Heart right ventricle (tissue), 16 donors: ENCODE measurements at regions of chr3 and their contacts with region 1.

Region 1: DNA sequence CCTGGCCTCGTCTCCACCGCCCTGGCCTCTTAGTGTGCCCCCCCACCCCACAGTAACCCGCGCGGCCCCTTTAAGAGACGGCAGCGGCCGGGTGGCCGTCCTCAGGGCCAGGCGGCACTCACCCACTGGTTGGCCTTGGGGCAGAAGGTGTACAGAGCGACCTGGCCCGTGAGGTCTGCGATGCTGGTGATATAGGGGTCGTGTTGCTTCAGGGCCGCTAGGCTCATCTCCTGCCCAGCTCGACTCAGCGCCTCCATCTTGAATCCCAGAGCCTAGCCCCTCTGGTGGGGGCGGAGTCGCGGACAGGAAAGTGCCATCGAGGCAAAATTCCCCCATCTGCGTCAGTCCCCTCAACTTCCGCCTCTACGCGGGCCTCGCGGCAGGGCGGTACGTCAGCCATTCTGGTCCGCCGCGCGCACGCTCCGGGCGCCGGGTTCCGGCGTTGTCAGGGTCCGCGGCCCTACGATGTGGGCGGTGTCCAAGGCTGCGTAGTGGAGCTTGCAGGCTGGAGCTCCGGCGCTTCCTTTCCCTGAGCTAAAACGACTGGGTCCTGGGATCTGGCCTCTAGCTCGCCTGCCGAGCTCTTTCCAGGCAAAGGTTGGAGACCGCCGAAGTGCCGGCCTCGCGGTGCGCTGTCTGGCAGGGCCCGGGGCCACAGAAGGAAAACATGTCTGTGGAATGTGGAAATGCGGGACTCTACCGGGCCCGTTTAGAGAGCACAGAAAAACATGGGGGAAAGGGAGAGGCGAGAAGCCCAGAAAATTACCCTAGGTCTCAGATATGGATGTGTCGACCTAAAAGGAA is at the start of gene DCP1A:
- DNase-seq: peak; percentile 93 to 96
- ATAC-seq: peak; percentile 99
- H3K4me3 ChIP-seq: peak within 1 kb of the TSS; percentile 77 to 92 (median 84)
- H3K27ac ChIP-seq: peak within 1 kb of the TSS; percentile 82 to 97 (median 95)
- H3K4me1 ChIP-seq: peaks cover 0 to 47% (median 35%) of the 10 kb centered on the region in 9 donors
- H3K27me3 ChIP-seq: no peaks in the 10 kb centered on the region
- CTCF ChIP-seq: no peak
- total RNA-seq, gene DCP1A: 16.0 to 24.1 (median 19.5) TPM

Region 2: GRCh38 chr3:53130179-53131061 is 217.0 kb before region 1 on chr3 and contains the start of gene RFT1:
- intact Hi-C with region 1: no loop called
- DNase-seq: peak; percentile 98 to 99
- ATAC-seq: peak; percentile 94 to 99 (median 98)
- H3K4me3 ChIP-seq: peak within 1 kb of the TSS; percentile 73 to 96 (median 89)
- H3K27ac ChIP-seq: peak within 1 kb of the TSS; percentile 84 to 98 (median 90)
- H3K4me1 ChIP-seq: peaks cover 6 to 42% (median 23%) of the 10 kb centered on the region in 9 donors
- H3K27me3 ChIP-seq: no peaks in the 10 kb centered on the region
- CTCF ChIP-seq: peak in 4 of 9 donors; percentile 10 to 43 (median 38)
- total RNA-seq, gene RFT1: 5.7 to 13.1 (median 9.5) TPM

Region 3: GRCh38 chr3:53255775-53256703 is 91.4 kb before region 1 on chr3 and contains the start of gene TKT:
- intact Hi-C with region 1: loop called in 2 of 10 experiments (anchors 5 to 10 kb)
- DNase-seq: peak; percentile 83 to 89
- ATAC-seq: peak; percentile 80 to 90 (median 86)
- H3K4me3 ChIP-seq: peak within 1 kb of the TSS; percentile 61 to 95 (median 77)
- H3K27ac ChIP-seq: peak within 1 kb of the TSS; percentile 23 to 95 (median 90)
- H3K4me1 ChIP-seq: peaks cover 14 to 54% (median 45%) of the 10 kb centered on the region in 9 donors
- H3K27me3 ChIP-seq: no peaks in the 10 kb centered on the region
- CTCF ChIP-seq: no peak
- total RNA-seq, gene TKT: 16.5 to 81.8 (median 25.1) TPM

Region 4: DNA sequence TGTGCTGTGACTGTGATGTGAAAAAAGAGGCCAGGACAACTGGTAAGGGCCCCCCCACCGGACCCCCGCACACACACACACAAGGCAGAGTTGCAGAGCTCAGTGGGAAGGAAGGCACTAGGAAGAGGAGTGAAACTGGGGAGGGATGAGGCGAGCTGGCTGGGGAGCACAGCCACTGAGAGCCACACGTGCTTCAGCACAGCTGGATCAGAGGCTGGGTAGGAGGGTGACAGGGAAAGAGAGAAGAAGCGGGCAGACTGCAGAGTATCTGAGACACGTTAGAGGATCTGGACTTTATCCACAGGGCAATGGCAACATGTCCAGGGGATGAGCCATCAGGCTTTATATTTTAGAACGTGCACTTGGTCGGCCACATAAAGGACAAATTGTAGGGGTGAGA is 53.6 kb before region 1 on chr3:
- intact Hi-C with region 1: loop called in 2 of 10 experiments (anchors 5 kb)
- DNase-seq: no peak
- ATAC-seq: peak in 7 of 8 donors; percentile 7 to 65 (median 50)
- H3K4me3 ChIP-seq: no peak overlapping the region
- H3K27ac ChIP-seq: no peak overlapping the region
- H3K4me1 ChIP-seq: peaks cover 0 to 27% (median 0%) of the 10 kb centered on the region in 9 donors
- H3K27me3 ChIP-seq: no peaks in the 10 kb centered on the region
- CTCF ChIP-seq: no peak

Region 5: GRCh38 chr3:53303957-53304356 is 43.5 kb before region 1 on chr3:
- intact Hi-C with region 1: loop called in 3 of 10 experiments (anchors 5 kb)
- DNase-seq: no peak
- ATAC-seq: peak in 6 of 8 donors; percentile 25 to 55 (median 37)
- H3K4me3 ChIP-seq: no peak overlapping the region
- H3K27ac ChIP-seq: peak overlapping the region in 8 of 10 donors; percentile 42 to 78 (median 58)
- H3K4me1 ChIP-seq: peaks cover 0 to 26% (median 7%) of the 10 kb centered on the region in 9 donors
- H3K27me3 ChIP-seq: no peaks in the 10 kb centered on the region
- CTCF ChIP-seq: no peak

Region 6: DNA sequence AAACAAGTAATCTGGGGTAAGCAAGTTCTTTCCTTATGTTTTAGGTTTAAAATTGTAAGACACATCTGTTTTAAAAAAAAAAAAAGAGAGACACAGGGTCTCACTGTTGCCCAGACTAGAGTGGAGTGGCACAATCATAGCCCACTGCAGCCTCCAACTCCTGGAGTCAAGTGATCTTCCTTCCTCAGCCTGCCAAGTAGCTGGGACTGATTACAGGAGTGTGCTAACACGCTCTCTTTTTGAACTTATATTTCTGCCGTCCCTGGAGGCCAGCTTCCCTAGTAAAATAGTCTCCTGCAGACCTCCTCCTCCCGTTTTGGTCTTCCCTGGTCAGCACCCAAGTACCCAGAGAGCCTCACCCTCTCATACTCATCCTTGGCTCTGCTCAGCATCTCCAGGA is 35.6 kb before region 1 on chr3:
- intact Hi-C with region 1: loop called in 1 of 10 experiments (anchors 5 kb)
- DNase-seq: no peak
- ATAC-seq: peak in 3 of 8 donors; percentile 42 to 58 (median 45)
- H3K4me3 ChIP-seq: no peak overlapping the region
- H3K27ac ChIP-seq: no peak overlapping the region
- H3K4me1 ChIP-seq: peaks cover 0 to 21% (median 0%) of the 10 kb centered on the region in 9 donors
- H3K27me3 ChIP-seq: no peaks in the 10 kb centered on the region
- CTCF ChIP-seq: no peak

Region 7: DNA sequence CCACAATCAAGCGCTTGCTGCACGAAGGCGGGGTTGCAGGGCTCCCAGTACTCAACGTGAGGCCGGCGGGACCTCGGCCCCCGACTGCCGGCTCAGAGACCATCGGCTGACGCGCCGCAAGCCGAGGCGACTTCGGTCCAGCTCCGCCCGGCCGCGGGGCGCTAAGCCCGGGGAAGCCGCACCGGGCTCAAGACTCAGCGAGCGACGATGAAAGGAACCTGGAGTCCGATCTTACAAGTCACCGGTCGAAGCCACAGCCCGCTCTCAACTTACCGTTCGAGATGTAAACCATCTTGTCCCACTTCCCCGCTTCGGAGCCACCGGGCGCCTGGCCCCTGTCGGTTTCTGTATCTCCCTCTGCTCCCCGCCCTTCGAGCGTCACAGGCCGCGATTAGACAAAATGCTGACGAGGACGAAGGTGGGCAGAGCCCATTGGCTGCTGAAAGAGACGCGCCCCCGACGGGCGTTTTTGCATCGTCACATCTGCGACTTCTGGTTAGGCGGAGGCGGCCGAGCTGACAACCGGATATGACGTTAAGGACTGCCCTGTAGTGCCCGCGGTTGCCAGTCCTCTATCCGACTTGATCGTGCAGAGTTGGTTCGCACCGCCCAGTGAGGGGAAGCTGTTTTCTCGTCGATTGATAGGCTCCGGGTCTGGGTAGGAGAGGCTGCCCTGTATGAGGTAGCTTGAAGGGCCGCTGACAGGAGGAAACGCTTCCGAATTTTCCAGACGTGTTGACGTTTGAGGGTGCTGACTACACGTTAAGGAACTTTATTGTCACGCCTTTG is 544.2 kb after region 1 on chr3 and contains the start of gene SELENOK:
- intact Hi-C with region 1: loop called in 1 of 10 experiments (anchors 5 kb)
- DNase-seq: peak; percentile 97 to 99
- ATAC-seq: peak; percentile 98 to 99 (median 99)
- H3K4me3 ChIP-seq: peak within 1 kb of the TSS; percentile 76 to 97 (median 82)
- H3K27ac ChIP-seq: peak within 1 kb of the TSS; percentile 62 to 97 (median 92)
- H3K4me1 ChIP-seq: peaks cover 0 to 40% (median 33%) of the 10 kb centered on the region in 9 donors
- H3K27me3 ChIP-seq: peaks cover 0 to 30% (median 0%) of the 10 kb centered on the region in 7 donors
- CTCF ChIP-seq: peak in 1 of 9 donors; percentile 18
- total RNA-seq, gene SELENOK: 90.9 to 146 (median 101) TPM